ENCODE measurements at regions of chr15 and their contacts with region 1.

Region 1: DNA sequence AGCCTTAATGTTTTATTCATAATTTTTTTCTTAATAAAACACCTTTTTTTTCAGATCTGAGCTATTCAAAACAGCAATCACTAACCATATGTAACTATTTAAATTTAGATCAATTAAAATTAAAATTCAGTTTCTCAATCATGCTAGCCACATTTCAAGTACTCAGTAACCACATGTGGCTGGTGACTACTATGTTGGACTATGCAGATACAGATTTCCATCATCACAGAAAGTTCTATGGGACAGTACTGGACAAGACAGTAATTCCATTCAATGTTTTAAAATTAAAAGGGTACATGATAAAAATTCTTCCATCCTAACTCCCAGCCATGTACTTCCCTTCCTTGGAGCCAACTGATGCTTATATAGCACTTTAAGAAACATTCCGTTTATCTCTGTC is 119.3 kb downstream of the GLDN start:
- DNase-seq: no peak
- H3K4me3 ChIP-seq: no peak overlapping the region
- H3K27ac ChIP-seq: no peak overlapping the region
- H3K4me1 ChIP-seq: no peaks in the 10 kb centered on the region
- H3K27me3 ChIP-seq: no peaks in the 10 kb centered on the region
- CTCF ChIP-seq: no peak

Region 2: GRCh38 chr15:50458348-50459112 is 1002.3 kb before region 1 on chr15:
- CTCF ChIA-PET with region 1: no interaction called
- POLR2A ChIA-PET with region 1: interaction called, 10 read pairs
- intact Hi-C with region 1: no loop called
- DNase-seq: no peak
- H3K4me3 ChIP-seq: no peak overlapping the region
- H3K27ac ChIP-seq: no peak overlapping the region
- H3K4me1 ChIP-seq: no peaks in the 10 kb centered on the region
- H3K27me3 ChIP-seq: no peaks in the 10 kb centered on the region
- CTCF ChIP-seq: no peak

Region 3: DNA sequence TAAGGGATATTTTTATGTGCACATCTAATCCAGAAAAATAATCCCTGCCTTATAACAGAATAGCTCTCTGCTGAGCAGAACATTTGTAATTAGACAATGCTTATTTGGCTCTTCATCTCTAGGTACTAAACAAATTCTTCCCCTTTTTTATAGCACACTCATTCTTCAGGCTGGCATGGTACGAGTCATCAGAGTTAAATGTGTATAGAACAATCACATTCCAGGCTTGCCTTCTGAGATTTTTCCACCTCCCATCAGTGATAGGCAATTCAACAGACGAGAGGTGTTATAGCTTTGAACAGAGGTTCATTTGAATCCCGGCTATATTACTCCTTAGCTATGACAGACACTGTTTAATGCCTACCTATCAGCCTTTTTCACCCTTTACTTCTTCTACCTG is 673.9 kb before region 1 on chr15:
- CTCF ChIA-PET with region 1: no interaction called
- POLR2A ChIA-PET with region 1: no interaction called
- intact Hi-C with region 1: no loop called
- DNase-seq: no peak
- H3K4me3 ChIP-seq: no peak overlapping the region
- H3K27ac ChIP-seq: no peak overlapping the region
- H3K4me1 ChIP-seq: no peaks in the 10 kb centered on the region
- H3K27me3 ChIP-seq: no peaks in the 10 kb centered on the region
- CTCF ChIP-seq: no peak

Region 4: GRCh38 chr15:51547656-51548055 is 86.9 kb after region 1 on chr15:
- CTCF ChIA-PET with region 1: no interaction called
- POLR2A ChIA-PET with region 1: no interaction called
- intact Hi-C with region 1: no loop called
- DNase-seq: no peak
- H3K4me3 ChIP-seq: no peak overlapping the region
- H3K27ac ChIP-seq: no peak overlapping the region
- H3K4me1 ChIP-seq: no peaks in the 10 kb centered on the region
- H3K27me3 ChIP-seq: no peaks in the 10 kb centered on the region
- CTCF ChIP-seq: no peak

Region 5: DNA sequence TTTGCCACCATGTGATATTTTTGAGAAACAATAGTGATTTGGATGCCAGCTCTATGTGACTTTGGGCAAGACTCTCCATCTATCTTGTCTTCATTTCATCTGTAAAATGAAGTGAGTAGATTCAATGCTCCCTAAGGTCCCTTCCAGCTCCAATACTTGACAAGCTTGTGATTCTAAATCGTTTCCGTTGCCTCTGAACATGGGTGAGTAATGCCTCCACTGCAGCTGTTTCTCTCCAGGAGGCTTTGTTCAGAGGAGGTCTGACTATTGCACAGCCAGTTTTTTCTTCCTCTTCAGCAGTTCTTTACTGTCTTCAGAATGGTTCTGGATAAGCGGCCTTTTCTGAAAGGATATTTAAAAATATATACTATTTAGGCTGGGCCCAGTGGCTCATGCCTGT is 353.8 kb after region 1 on chr15:
- CTCF ChIA-PET with region 1: no interaction called
- POLR2A ChIA-PET with region 1: no interaction called
- intact Hi-C with region 1: no loop called
- DNase-seq: no peak
- H3K4me3 ChIP-seq: no peak overlapping the region
- H3K27ac ChIP-seq: no peak overlapping the region
- H3K4me1 ChIP-seq: peaks cover 16% of the 10 kb centered on the region
- H3K27me3 ChIP-seq: no peaks in the 10 kb centered on the region
- CTCF ChIP-seq: no peak

Measured in PC-9 (cell line).